MCF 10A (cell line): ENCODE measurements at regions of chr1 and their contacts with region 1.

Region 1: DNA sequence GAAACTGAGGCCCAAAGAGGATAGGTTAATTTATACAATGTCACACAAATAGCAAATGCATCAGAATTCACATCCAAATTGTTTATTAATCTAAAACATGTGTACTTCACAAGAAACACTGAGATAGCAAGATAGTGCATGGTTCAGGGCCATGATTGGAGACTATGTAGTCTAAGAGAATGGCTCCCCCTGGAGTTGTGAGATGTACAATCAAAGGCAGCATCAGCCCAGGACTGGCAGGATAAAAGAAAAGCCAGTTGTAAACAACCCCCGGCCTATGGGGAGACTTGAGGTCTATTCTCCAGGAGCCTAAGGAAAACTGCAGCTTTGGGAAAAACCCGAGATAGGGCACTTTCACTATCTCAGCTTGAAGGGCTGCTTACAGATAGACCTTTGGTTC is 511.0 kb downstream of the OMA1 start:
- DNase-seq: peak; percentile 29
- H3K4me3 Mint-ChIP-seq: no peak overlapping the region
- H3K27ac Mint-ChIP-seq: no peak overlapping the region
- H3K4me1 Mint-ChIP-seq: no peaks in the 10 kb centered on the region
- H3K27me3 Mint-ChIP-seq: peaks cover 22% of the 10 kb centered on the region
- CTCF ChIP-seq: peak; percentile 12

Region 2: DNA sequence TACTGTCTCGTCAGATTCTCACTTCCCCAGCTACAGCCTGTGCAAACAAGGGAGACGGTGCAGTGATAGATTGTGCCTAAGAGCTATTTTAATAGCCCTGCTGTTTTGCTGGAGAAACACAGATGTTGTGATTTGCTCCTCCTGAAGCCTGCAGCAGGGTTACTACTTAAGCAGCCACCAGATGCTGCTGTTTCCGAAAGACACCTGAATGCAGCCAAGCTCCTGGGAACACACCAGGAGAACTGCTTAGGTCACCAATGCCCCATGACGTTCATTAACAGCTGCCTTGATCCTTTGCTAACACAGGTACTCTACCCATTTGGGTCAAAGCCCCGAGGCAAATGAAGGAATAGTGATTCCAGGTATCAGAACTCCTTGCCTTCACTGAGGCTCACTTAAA is 199.9 kb before region 1 on chr1:
- CTCF ChIA-PET with region 1: no interaction called
- POLR2A ChIA-PET with region 1: no interaction called
- intact Hi-C with region 1: loop called (anchors 5 kb)
- DNase-seq: peak; percentile 31
- H3K4me3 Mint-ChIP-seq: no peak overlapping the region
- H3K27ac Mint-ChIP-seq: no peak overlapping the region
- H3K4me1 Mint-ChIP-seq: peaks cover 10% of the 10 kb centered on the region
- H3K27me3 Mint-ChIP-seq: no peaks in the 10 kb centered on the region
- CTCF ChIP-seq: peak; percentile 20

Region 3: DNA sequence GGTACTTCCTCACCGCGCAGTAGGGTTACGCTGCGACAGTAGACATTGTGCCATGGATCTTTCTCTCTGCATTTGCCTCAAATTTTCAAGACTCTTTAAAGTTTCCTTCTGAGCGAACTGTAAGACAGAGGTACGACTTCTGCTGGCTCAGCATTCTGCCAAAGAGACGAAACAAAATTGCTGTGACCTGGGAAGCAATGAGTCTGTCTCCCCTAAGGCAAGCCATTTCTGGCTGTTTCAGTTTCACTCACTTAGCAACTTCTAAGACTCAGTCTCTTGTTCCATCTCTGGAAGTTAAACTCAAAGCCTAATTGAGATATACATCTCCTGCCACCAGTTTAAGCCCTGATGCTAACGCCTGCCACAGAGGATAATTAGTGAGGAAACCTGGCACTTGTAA is 100.8 kb before region 1 on chr1:
- CTCF ChIA-PET with region 1: no interaction called
- POLR2A ChIA-PET with region 1: no interaction called
- intact Hi-C with region 1: no loop called
- DNase-seq: no peak
- H3K4me3 Mint-ChIP-seq: no peak overlapping the region
- H3K27ac Mint-ChIP-seq: no peak overlapping the region
- H3K4me1 Mint-ChIP-seq: no peaks in the 10 kb centered on the region
- H3K27me3 Mint-ChIP-seq: no peaks in the 10 kb centered on the region
- CTCF ChIP-seq: no peak